Natural killer cell (primary cell): ENCODE measurements at regions of chr17 and their contacts with region 1.

Region 1: DNA sequence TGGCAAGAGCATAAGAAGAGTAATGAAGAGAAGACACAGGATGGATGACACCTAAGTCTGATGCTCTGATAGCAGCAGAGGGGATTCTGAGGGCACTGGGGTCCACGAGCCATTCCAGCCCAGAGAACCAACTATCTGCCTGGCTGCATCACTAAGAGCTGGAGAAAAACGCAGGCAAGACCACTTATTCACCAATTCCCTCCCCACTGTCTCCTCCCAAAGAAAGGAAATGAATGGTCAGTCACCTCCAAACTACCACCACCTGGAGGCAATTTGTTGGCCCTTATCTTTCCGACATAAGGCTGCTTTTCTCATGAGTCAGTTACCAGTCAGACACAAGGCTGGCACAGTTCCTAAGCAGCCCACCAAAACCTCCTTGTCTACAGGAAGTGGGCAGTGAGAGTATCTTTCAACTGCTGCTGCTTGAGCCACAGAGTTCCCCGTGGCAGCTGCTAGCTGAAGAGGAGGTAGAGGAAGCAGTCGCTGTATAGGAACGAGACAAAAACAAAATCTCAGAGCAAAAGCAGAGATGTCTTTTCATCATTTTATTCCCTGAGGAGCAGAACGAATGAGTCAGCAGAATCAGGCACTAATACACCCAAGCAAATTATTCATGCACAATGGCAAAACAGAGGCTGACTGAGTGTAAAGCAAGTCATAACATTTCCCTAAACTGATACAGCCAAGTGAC is 111.1 kb downstream of the SMG6 start:
- DNase-seq: peak; percentile 52 to 79
- ATAC-seq: peak; percentile 83 to 97 (median 90)
- H3K4me3 ChIP-seq: no peak overlapping the region
- H3K4me3 Mint-ChIP-seq: peak overlapping the region; percentile 78
- H3K27ac ChIP-seq: peak overlapping the region; percentile 50
- H3K27ac Mint-ChIP-seq: peak overlapping the region; percentile 91 to 92
- H3K4me1 ChIP-seq: peaks cover 39% of the 10 kb centered on the region
- H3K4me1 Mint-ChIP-seq: peaks cover 81 to 82% of the 10 kb centered on the region in 2 donors
- H3K27me3 ChIP-seq: no peaks in the 10 kb centered on the region
- H3K27me3 Mint-ChIP-seq: no peaks in the 10 kb centered on the region
- CTCF ChIP-seq: no peak

Region 2: GRCh38 chr17:2177235-2177811 is 15.2 kb before region 1 on chr17:
- intact Hi-C with region 1: loop called (anchors 2 kb)
- DNase-seq: no peak
- ATAC-seq: peak; percentile 53 to 80 (median 66)
- H3K4me3 ChIP-seq: no peak overlapping the region
- H3K4me3 Mint-ChIP-seq: peak overlapping the region; percentile 69
- H3K27ac ChIP-seq: peak overlapping the region; percentile 30
- H3K27ac Mint-ChIP-seq: peak overlapping the region; percentile 88 to 92
- H3K4me1 ChIP-seq: peaks cover 59% of the 10 kb centered on the region
- H3K4me1 Mint-ChIP-seq: peaks cover 74 to 82% of the 10 kb centered on the region in 2 donors
- H3K27me3 ChIP-seq: no peaks in the 10 kb centered on the region
- H3K27me3 Mint-ChIP-seq: no peaks in the 10 kb centered on the region
- CTCF ChIP-seq: no peak

Region 3: DNA sequence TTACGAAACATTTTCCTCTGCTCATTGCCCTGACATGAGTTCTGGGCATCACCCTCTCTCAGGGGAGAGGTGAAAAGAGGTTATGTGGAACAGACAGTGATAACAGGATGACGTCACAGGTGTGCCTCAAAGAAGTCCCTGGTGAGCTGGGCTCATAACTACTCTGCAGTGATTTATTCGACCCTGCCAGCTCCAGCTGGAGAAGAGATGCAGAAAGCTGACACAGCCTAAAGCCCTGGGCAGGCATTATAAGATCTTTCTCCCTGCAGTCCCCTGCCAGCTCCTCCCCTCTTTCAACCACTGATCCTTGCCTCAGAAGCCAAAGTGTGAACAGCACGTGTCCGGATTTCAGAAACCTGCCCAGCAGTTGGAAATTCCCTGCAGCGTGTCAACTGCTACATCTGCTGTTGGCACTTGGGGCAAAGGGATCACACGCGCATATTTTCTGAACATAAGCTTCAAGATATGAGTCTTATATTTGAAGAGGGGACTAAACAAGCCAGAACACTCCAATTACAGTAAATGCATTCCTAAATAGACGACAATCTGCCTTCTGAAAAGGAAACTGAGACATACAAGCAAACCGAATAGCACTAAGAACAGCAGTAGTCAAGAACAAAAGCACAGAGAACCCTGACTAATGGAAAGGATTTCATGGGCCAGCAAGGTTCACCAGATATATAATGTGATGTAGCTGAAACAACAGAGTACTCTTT is 30.5 kb after region 1 on chr17:
- intact Hi-C with region 1: loop called (anchors 1 kb)
- DNase-seq: peak; percentile 80 to 91
- ATAC-seq: peak; percentile 90 to 97 (median 94)
- H3K4me3 ChIP-seq: no peak overlapping the region
- H3K4me3 Mint-ChIP-seq: peak overlapping the region; percentile 72
- H3K27ac ChIP-seq: peak overlapping the region; percentile 35
- H3K27ac Mint-ChIP-seq: peak overlapping the region; percentile 80 to 88
- H3K4me1 ChIP-seq: peaks cover 22% of the 10 kb centered on the region
- H3K4me1 Mint-ChIP-seq: peaks cover 28 to 31% of the 10 kb centered on the region in 2 donors
- H3K27me3 ChIP-seq: no peaks in the 10 kb centered on the region
- H3K27me3 Mint-ChIP-seq: no peaks in the 10 kb centered on the region
- CTCF ChIP-seq: no peak

Region 4: DNA sequence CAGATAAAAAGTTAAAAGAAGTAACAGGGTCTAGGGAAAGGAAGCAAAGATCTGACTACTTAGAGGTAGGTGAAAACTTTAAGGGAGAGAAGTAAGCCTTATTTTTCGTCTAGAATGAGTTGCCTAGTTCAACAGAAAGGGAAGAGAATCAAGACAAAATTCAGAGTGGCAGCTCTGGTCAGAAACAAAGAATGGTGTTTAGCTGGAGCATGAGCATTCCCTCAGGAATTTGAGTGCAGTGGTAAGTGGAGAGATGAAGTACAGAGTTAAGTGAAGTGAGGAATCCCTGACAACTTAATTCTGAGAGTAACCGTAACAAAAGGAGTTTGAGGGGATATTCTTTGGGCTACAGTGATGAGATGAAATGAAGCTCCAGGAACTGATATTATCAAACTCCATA is 99.6 kb after region 1 on chr17:
- intact Hi-C with region 1: no loop called
- DNase-seq: no peak
- ATAC-seq: no peak
- H3K4me3 ChIP-seq: no peak overlapping the region
- H3K4me3 Mint-ChIP-seq: no peak overlapping the region
- H3K27ac ChIP-seq: no peak overlapping the region
- H3K27ac Mint-ChIP-seq: no peak overlapping the region
- H3K4me1 ChIP-seq: no peaks in the 10 kb centered on the region
- H3K4me1 Mint-ChIP-seq: peaks cover 14 to 24% of the 10 kb centered on the region in 2 donors
- H3K27me3 ChIP-seq: no peaks in the 10 kb centered on the region
- H3K27me3 Mint-ChIP-seq: no peaks in the 10 kb centered on the region
- CTCF ChIP-seq: no peak